CD4-positive, alpha-beta memory T cell (primary cell): ENCODE measurements at regions of chr18 and their contacts with region 1.

Region 1: GRCh38 chr18:35949903-35950627 is 22.4 kb upstream of the RMP24 start:
- DNase-seq: peak; percentile 53 to 63 (median 60)
- H3K4me3 ChIP-seq: peak overlapping the region; percentile 3 to 36
- H3K4me3 Mint-ChIP-seq: peak overlapping the region; percentile 83 to 91 (median 88)
- H3K27ac ChIP-seq: no peak overlapping the region
- H3K27ac Mint-ChIP-seq: peak overlapping the region in 1 of 7 donors; percentile 72
- H3K4me1 ChIP-seq: peaks cover 7% of the 10 kb centered on the region
- H3K4me1 Mint-ChIP-seq: peaks cover 0 to 4% (median 3%) of the 10 kb centered on the region in 4 donors
- H3K27me3 ChIP-seq: no peaks in the 10 kb centered on the region
- H3K27me3 Mint-ChIP-seq: peaks cover 8 to 16% of the 10 kb centered on the region in 2 donors

Region 2: DNA sequence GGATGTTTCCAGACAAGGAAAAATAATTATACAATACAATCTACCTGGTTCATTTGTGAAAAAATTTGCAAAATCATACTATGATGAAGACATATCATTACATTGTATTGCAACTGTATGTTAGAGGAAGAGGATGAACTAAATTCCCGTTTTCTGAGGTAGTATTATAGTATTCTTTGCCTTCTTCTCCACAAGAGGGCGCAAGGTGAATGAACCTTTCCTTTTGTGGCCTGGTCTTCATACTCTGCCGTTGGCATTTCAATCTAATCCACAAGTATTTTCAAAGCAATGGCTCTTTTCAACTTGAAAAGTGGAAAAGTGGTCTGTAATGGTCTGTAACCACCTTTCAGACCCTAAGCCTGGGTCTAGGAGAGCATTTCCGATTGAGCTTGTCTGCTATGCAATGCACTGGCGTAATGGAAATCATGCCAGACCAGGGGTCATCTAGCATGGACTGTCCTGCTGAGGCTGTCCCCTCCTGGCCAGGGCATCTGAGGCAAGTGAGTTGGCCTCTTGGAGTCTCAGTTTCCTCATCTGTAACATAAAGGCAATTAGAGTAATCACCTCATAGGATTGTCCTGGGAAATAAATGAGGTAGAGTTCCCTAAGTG is 542.1 kb before region 1 on chr18:
- CTCF ChIA-PET with region 1: interaction called, 4 read pairs
- POLR2A ChIA-PET with region 1: no interaction called
- intact Hi-C with region 1: loop called (anchors 1 kb)
- DNase-seq: peak in 4 of 5 donors; percentile 48 to 66 (median 60)
- H3K4me3 ChIP-seq: no peak overlapping the region
- H3K4me3 Mint-ChIP-seq: no peak overlapping the region
- H3K27ac ChIP-seq: no peak overlapping the region
- H3K27ac Mint-ChIP-seq: no peak overlapping the region
- H3K4me1 ChIP-seq: peaks cover 4% of the 10 kb centered on the region
- H3K4me1 Mint-ChIP-seq: peaks cover 0 to 10% (median 9%) of the 10 kb centered on the region in 4 donors
- H3K27me3 ChIP-seq: no peaks in the 10 kb centered on the region
- H3K27me3 Mint-ChIP-seq: peaks cover 2 to 4% of the 10 kb centered on the region in 2 donors

Region 3: DNA sequence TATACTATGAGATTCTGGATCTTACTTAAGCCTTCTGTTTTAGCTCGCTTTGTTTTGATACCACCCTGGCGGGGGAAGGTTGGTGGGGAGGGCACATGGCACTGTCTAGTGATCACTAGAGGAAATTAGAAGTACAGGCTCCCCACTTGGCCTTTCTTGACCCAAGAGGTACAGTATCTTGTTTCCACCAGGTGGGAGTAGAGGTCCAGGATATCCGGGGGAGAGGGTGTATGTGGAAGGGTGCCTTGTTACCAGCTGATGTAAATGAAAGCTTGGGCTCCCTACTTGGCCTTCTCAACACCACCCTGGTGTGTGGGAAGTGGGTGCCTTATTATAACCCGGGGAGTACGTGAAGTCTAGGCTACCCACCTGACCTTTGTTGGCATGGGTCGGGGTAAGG is 361.1 kb before region 1 on chr18:
- CTCF ChIA-PET with region 1: interaction called, 10 read pairs
- POLR2A ChIA-PET with region 1: no interaction called
- intact Hi-C with region 1: no loop called
- DNase-seq: peak in 4 of 5 donors; percentile 6 to 25 (median 23)
- H3K4me3 ChIP-seq: no peak overlapping the region
- H3K4me3 Mint-ChIP-seq: no peak overlapping the region
- H3K27ac ChIP-seq: no peak overlapping the region
- H3K27ac Mint-ChIP-seq: no peak overlapping the region
- H3K4me1 ChIP-seq: no peaks in the 10 kb centered on the region
- H3K4me1 Mint-ChIP-seq: peaks cover 8 to 25% (median 17%) of the 10 kb centered on the region in 4 donors
- H3K27me3 ChIP-seq: no peaks in the 10 kb centered on the region
- H3K27me3 Mint-ChIP-seq: no peaks in the 10 kb centered on the region

Region 4: GRCh38 chr18:35756506-35757117 is 193.5 kb before region 1 on chr18:
- CTCF ChIA-PET with region 1: interaction called, 22 read pairs
- POLR2A ChIA-PET with region 1: no interaction called
- intact Hi-C with region 1: loop called (anchors 1 kb)
- DNase-seq: peak in 4 of 5 donors; percentile 46 to 59 (median 58)
- H3K4me3 ChIP-seq: no peak overlapping the region
- H3K4me3 Mint-ChIP-seq: no peak overlapping the region
- H3K27ac ChIP-seq: no peak overlapping the region
- H3K27ac Mint-ChIP-seq: no peak overlapping the region
- H3K4me1 ChIP-seq: no peaks in the 10 kb centered on the region
- H3K4me1 Mint-ChIP-seq: no peaks in the 10 kb centered on the region
- H3K27me3 ChIP-seq: no peaks in the 10 kb centered on the region
- H3K27me3 Mint-ChIP-seq: peaks cover 11 to 17% of the 10 kb centered on the region in 2 donors